B cell (primary cell): ENCODE measurements at regions of chr13 and their contacts with region 1.

Region 1: DNA sequence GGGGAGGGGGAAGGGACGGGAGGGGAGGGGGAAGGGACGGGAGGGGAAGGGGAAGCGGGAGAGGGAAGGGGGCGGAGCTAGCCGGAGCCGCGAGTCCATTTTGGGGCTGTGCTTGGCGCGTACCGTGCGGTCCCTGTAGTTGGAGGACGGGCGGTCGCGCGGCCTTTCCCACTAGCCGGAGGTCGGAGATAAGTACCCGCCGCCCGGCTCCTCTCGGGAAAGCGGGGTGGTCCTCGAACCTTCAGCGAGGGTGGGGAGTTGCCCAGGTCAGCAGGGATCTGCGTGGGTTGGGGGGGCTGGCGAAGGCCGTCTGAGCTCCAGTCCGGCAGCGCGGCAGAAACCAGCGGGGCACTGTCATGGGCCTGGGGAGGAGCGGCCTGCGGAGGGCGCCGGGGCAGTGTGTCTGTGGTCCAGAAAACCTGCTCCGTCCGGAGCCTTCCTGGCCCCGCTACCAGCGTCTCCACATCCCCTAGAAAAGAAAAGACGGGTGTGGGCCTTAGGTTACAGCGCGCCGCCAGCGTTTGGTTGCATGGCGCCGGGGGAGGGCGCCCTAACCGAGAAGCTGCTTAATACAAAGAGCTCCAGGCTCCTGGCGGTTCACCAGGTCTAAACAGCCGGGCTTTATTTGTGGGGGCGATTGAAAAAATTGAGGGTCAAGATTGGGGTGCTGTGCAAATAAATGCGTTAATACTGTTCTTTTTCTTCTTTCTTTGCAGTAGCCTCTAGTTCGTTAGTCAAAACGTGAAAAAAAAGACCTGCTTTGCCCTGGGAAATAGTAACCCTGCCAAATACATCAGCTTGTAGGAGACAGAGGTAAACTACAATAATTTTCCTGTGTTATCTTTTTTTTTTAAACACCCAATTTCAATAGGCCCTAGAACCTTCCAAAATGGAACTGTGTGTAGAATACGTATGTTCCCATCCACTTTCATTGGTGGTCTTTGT is at the start of gene TRIM13:
- DNase-seq: peak; percentile 93
- ATAC-seq: peak; percentile 74
- H3K4me3 ChIP-seq: peak within 1 kb of the TSS; percentile 78 to 96 (median 94)
- H3K4me3 Mint-ChIP-seq: peak within 1 kb of the TSS; percentile 90
- H3K27ac ChIP-seq: peak within 1 kb of the TSS; percentile 93
- H3K27ac Mint-ChIP-seq: peak within 1 kb of the TSS; percentile 96
- H3K4me1 ChIP-seq: peaks cover 30 to 42% of the 10 kb centered on the region in 2 donors
- H3K4me1 Mint-ChIP-seq: peaks cover 49% of the 10 kb centered on the region
- H3K27me3 ChIP-seq: no peaks in the 10 kb centered on the region
- H3K27me3 Mint-ChIP-seq: no peaks in the 10 kb centered on the region
- CTCF ChIP-seq: peak; percentile 89
- total RNA-seq, gene TRIM13: 45.9 and 52.8 TPM in 2 replicates

Region 2: GRCh38 chr13:49976314-49977258 is 20.6 kb before region 1 on chr13:
- CTCF ChIA-PET with region 1: interaction called, 15 read pairs
- POLR2A ChIA-PET with region 1: interaction called, 8 read pairs
- intact Hi-C with region 1: loop called (anchors 2 kb)
- DNase-seq: peak; percentile 86
- ATAC-seq: peak; percentile 78
- H3K4me3 ChIP-seq: no peak overlapping the region
- H3K4me3 Mint-ChIP-seq: no peak overlapping the region
- H3K27ac ChIP-seq: no peak overlapping the region
- H3K27ac Mint-ChIP-seq: no peak overlapping the region
- H3K4me1 ChIP-seq: peaks cover 0 to 4% of the 10 kb centered on the region in 2 donors
- H3K4me1 Mint-ChIP-seq: peaks cover 4% of the 10 kb centered on the region
- H3K27me3 ChIP-seq: no peaks in the 10 kb centered on the region
- H3K27me3 Mint-ChIP-seq: no peaks in the 10 kb centered on the region
- CTCF ChIP-seq: peak; percentile 98

Region 3: GRCh38 chr13:50033725-50034124 is 36.5 kb after region 1 on chr13:
- CTCF ChIA-PET with region 1: interaction called, 3 read pairs
- POLR2A ChIA-PET with region 1: interaction called, 3 read pairs
- intact Hi-C with region 1: loop called (anchors 1 kb)
- DNase-seq: no peak
- ATAC-seq: no peak
- H3K4me3 ChIP-seq: no peak overlapping the region
- H3K4me3 Mint-ChIP-seq: no peak overlapping the region
- H3K27ac ChIP-seq: peak overlapping the region in 1 of 2 donors; percentile 13
- H3K27ac Mint-ChIP-seq: peak overlapping the region; percentile 55
- H3K4me1 ChIP-seq: peaks cover 0 to 6% of the 10 kb centered on the region in 2 donors
- H3K4me1 Mint-ChIP-seq: peaks cover 12% of the 10 kb centered on the region
- H3K27me3 ChIP-seq: no peaks in the 10 kb centered on the region
- H3K27me3 Mint-ChIP-seq: no peaks in the 10 kb centered on the region
- CTCF ChIP-seq: no peak

Region 4: GRCh38 chr13:50130123-50130946 is 133.1 kb after region 1 on chr13:
- CTCF ChIA-PET with region 1: interaction called, 34 read pairs
- POLR2A ChIA-PET with region 1: interaction called, 69 read pairs
- intact Hi-C with region 1: no loop called
- DNase-seq: peak; percentile 71
- ATAC-seq: no peak
- H3K4me3 ChIP-seq: peak overlapping the region; percentile 43 to 87 (median 61)
- H3K4me3 Mint-ChIP-seq: peak overlapping the region; percentile 92
- H3K27ac ChIP-seq: no peak overlapping the region
- H3K27ac Mint-ChIP-seq: peak overlapping the region; percentile 86
- H3K4me1 ChIP-seq: peaks cover 72 to 73% of the 10 kb centered on the region in 2 donors
- H3K4me1 Mint-ChIP-seq: peaks cover 63% of the 10 kb centered on the region
- H3K27me3 ChIP-seq: peaks cover 2 to 68% (median 47%) of the 10 kb centered on the region in 4 experiments
- H3K27me3 Mint-ChIP-seq: peaks cover 35% of the 10 kb centered on the region
- CTCF ChIP-seq: no peak

Region 5: GRCh38 chr13:50549221-50549942 is 552.2 kb after region 1 on chr13:
- CTCF ChIA-PET with region 1: no interaction called
- POLR2A ChIA-PET with region 1: no interaction called
- intact Hi-C with region 1: no loop called
- DNase-seq: no peak
- ATAC-seq: no peak
- H3K4me3 ChIP-seq: no peak overlapping the region
- H3K4me3 Mint-ChIP-seq: no peak overlapping the region
- H3K27ac ChIP-seq: no peak overlapping the region
- H3K27ac Mint-ChIP-seq: no peak overlapping the region
- H3K4me1 ChIP-seq: no peaks in the 10 kb centered on the region
- H3K4me1 Mint-ChIP-seq: peaks cover 10% of the 10 kb centered on the region
- H3K27me3 ChIP-seq: no peaks in the 10 kb centered on the region
- H3K27me3 Mint-ChIP-seq: no peaks in the 10 kb centered on the region
- CTCF ChIP-seq: no peak

Region 6: GRCh38 chr13:50635504-50635903 is 638.3 kb after region 1 on chr13:
- CTCF ChIA-PET with region 1: interaction called, 4 read pairs
- POLR2A ChIA-PET with region 1: interaction called, 5 read pairs
- intact Hi-C with region 1: loop called (anchors 5 kb)
- DNase-seq: peak; percentile 90
- ATAC-seq: peak; percentile 79
- H3K4me3 ChIP-seq: no peak overlapping the region
- H3K4me3 Mint-ChIP-seq: peak overlapping the region; percentile 63
- H3K27ac ChIP-seq: peak overlapping the region; percentile 92 to 95
- H3K27ac Mint-ChIP-seq: peak overlapping the region; percentile 96
- H3K4me1 ChIP-seq: peaks cover 26 to 30% of the 10 kb centered on the region in 2 donors
- H3K4me1 Mint-ChIP-seq: peaks cover 44% of the 10 kb centered on the region
- H3K27me3 ChIP-seq: no peaks in the 10 kb centered on the region
- H3K27me3 Mint-ChIP-seq: no peaks in the 10 kb centered on the region
- CTCF ChIP-seq: no peak